ENCODE measurements at regions of chr13 and their contacts with region 1.

Region 1: DNA sequence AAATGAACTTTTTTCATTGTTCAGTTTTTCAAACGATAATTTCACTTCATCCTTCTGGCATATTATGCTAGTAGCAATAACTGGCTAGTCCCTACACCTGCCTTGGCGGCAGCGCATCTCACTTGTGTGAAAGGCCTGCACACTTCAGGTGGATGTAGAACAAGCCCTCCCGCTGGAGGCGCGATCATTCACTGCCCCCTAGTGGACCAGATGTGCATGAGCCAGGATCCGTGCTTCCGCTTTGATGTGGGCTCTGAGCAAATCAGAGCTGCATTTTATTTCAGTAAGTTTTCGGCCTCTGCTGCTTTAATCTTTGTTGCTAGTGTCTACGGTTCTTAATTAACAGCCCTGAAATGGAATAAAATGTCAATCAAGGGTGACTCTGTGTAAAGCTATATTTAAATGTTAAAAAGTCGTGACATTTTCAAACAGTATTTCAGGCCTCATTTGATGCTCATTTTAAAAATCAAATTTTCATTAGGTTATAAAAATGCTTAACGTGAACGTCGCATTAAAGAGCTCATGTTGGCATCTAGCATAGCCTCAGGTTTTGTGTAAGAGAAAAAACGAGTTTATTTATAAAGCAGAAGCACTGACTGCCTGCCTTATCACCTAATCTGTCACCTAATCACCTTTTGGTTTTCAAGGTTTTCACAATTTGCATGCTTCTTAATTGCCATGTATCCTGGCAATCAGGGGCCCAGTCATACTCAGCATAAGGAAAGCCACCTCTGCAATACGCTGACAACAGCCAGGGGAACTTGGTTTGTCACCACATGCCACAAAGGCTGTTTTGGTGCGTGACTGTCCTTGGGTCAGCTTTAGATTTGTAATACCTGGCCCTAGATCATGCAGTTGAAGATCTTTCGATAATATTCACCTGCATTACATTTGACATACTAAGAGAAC is 112.2 kb downstream of the TEX26 start:
- DNase-seq: peak; percentile 86
- ATAC-seq: peak; percentile 85
- H3K4me3 Mint-ChIP-seq: peak overlapping the region; percentile 57
- H3K27ac Mint-ChIP-seq: no peak overlapping the region; the same call in 1 of the 2 replicates
- H3K4me1 Mint-ChIP-seq: peaks cover 5% of the 10 kb centered on the region; the same call in 1 of the 2 replicates
- H3K27me3 Mint-ChIP-seq: no peaks in the 10 kb centered on the region; the same call in 1 of the 2 replicates
- CTCF ChIP-seq: peak; percentile 94

Region 2: GRCh38 chr13:30766231-30766630 is 278.4 kb before region 1 on chr13:
- CTCF ChIA-PET with region 1: no interaction called
- POLR2A ChIA-PET with region 1: no interaction called
- DNase-seq: no peak
- ATAC-seq: no peak
- H3K4me3 Mint-ChIP-seq: no peak overlapping the region
- H3K27ac Mint-ChIP-seq: no peak overlapping the region
- H3K4me1 Mint-ChIP-seq: no peaks in the 10 kb centered on the region
- H3K27me3 Mint-ChIP-seq: no peaks in the 10 kb centered on the region
- CTCF ChIP-seq: no peak

Region 3: GRCh38 chr13:30865123-30866049 is 179.2 kb before region 1 on chr13:
- CTCF ChIA-PET with region 1: interaction called, 18 read pairs
- POLR2A ChIA-PET with region 1: no interaction called
- DNase-seq: peak; percentile 72
- ATAC-seq: peak; percentile 59
- H3K4me3 Mint-ChIP-seq: peak overlapping the region; percentile 69
- H3K27ac Mint-ChIP-seq: peak overlapping the region; percentile 78
- H3K4me1 Mint-ChIP-seq: peaks cover 54% of the 10 kb centered on the region
- H3K27me3 Mint-ChIP-seq: peaks cover 25% of the 10 kb centered on the region
- CTCF ChIP-seq: peak; percentile 81

Region 4: DNA sequence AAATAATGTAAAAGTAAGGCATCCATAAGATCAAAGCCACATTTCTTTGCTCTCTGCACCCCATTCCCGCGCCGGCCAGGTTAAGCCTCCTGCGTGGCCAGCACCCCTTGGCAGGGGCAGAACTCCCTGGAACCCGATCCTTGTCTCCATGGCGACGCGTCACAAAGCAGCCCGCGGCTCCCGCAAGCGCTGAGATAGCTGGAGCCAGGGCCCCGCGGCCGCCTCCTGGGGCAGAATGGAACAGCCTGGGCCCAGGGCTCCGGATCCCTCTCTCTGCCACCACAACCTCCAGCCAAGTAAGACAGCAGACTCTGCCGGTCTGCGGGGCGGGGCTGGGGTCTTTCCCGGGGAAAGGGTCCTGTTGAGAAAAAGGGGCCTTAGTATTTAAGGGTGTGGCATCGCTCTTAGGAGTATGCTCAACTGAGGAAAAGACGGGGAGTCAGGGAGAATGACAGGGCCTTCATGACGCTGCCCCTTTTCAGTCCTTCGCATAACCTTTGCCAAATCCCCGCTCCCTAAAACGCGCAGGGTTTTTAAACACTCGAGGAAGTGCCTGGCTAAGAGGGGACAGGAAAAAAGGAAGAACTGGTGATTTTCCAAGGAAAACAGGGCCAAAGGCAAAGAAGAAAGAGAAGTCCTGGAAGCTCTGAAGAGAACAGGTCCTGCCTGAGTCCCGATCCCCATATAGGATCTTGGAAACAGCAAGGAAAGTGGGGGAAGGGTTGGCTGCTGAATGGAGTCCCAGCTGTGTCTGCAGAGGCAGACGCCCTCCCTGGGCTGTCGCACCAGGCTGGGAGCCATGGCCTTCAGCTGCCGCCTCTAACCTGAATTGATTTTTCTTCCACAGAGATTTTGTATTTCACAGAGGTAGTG is 111.9 kb before region 1 on chr13 and contains the start of gene TEX26:
- CTCF ChIA-PET with region 1: interaction called, 13 read pairs
- POLR2A ChIA-PET with region 1: no interaction called
- DNase-seq: peak; percentile 83
- ATAC-seq: peak; percentile 95
- H3K4me3 Mint-ChIP-seq: peak within 1 kb of the TSS; percentile 62
- H3K27ac Mint-ChIP-seq: no peak within 1 kb of the TSS
- H3K4me1 Mint-ChIP-seq: peaks cover 24% of the 10 kb centered on the region
- H3K27me3 Mint-ChIP-seq: peaks cover 30% of the 10 kb centered on the region
- CTCF ChIP-seq: no peak
- total RNA-seq, gene TEX26: not detected in 3 replicates

Region 5: DNA sequence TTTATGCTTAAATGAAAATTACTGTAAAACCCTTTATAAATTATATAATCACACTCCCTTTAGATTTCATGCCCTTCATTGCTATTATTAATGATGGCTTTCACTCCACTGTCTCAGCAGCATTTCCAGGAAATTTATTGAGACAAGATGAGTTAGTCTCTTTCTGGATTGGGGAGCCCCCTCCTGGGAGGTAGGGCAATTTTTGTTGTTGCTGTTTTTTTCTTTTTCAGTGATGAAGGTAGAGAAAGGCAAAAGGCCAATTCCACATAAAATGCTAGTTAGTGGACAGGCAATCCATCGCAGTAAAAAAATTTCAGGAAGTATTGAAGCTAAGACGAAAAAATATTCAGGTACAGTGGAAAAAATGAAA is 32.0 kb before region 1 on chr13:
- CTCF ChIA-PET with region 1: interaction called, 25 read pairs
- POLR2A ChIA-PET with region 1: no interaction called
- DNase-seq: no peak
- ATAC-seq: peak; percentile 29; the same call in 1 of the 2 replicates
- H3K4me3 Mint-ChIP-seq: no peak overlapping the region
- H3K27ac Mint-ChIP-seq: peak overlapping the region; percentile 14; the same call in 1 of the 2 replicates
- H3K4me1 Mint-ChIP-seq: peaks cover 33% of the 10 kb centered on the region
- H3K27me3 Mint-ChIP-seq: no peaks in the 10 kb centered on the region; the same call in 1 of the 2 replicates
- CTCF ChIP-seq: no peak

Region 6: GRCh38 chr13:31022288-31022895 is 22.2 kb before region 1 on chr13:
- CTCF ChIA-PET with region 1: interaction called, 17 read pairs
- POLR2A ChIA-PET with region 1: no interaction called
- DNase-seq: no peak
- ATAC-seq: no peak
- H3K4me3 Mint-ChIP-seq: no peak overlapping the region
- H3K27ac Mint-ChIP-seq: no peak overlapping the region
- H3K4me1 Mint-ChIP-seq: peaks cover 7% of the 10 kb centered on the region
- H3K27me3 Mint-ChIP-seq: no peaks in the 10 kb centered on the region; the same call in 1 of the 2 replicates
- CTCF ChIP-seq: no peak

Region 7: DNA sequence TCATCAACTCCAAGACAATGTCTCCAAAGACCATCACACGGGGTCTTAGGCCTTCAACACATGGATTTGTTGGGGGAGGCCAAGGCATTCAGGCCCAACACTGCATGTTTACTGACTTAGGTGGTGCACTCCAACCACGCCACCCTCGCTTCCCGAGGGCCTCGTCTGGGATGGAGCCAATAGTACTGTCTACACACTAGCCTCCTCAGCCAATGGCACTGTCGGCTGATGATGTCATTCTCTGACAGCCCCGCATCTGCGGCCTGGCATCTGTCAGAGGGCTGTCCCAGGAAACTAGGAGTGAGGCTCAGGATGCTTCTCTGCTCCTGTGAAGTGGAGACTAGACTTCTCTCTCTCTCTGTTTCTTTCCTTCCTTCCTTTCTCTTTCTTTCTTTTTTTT is 15.5 kb before region 1 on chr13:
- CTCF ChIA-PET with region 1: interaction called, 17 read pairs
- POLR2A ChIA-PET with region 1: no interaction called
- DNase-seq: no peak
- ATAC-seq: peak; percentile 55
- H3K4me3 Mint-ChIP-seq: no peak overlapping the region
- H3K27ac Mint-ChIP-seq: no peak overlapping the region
- H3K4me1 Mint-ChIP-seq: no peaks in the 10 kb centered on the region
- H3K27me3 Mint-ChIP-seq: no peaks in the 10 kb centered on the region; the same call in 1 of the 2 replicates
- CTCF ChIP-seq: no peak

Region 8: GRCh38 chr13:31056644-31057271 is 12.1 kb after region 1 on chr13:
- CTCF ChIA-PET with region 1: interaction called, 16 read pairs
- POLR2A ChIA-PET with region 1: no interaction called
- DNase-seq: no peak
- ATAC-seq: no peak; the same call in 1 of the 2 replicates
- H3K4me3 Mint-ChIP-seq: no peak overlapping the region
- H3K27ac Mint-ChIP-seq: no peak overlapping the region
- H3K4me1 Mint-ChIP-seq: peaks cover 8% of the 10 kb centered on the region
- H3K27me3 Mint-ChIP-seq: no peaks in the 10 kb centered on the region
- CTCF ChIP-seq: no peak

Measured in WTC11 (cell line).